Right ventricle myocardium inferior (tissue), 1 donor: ENCODE measurements at regions of chr11 and their contacts with region 1.

Region 1: GRCh38 chr11:120952461-120953434 is 71.2 kb upstream of the TBCEL start:
- DNase-seq: peak; percentile 85
- ATAC-seq: peak; percentile 94

Region 2: DNA sequence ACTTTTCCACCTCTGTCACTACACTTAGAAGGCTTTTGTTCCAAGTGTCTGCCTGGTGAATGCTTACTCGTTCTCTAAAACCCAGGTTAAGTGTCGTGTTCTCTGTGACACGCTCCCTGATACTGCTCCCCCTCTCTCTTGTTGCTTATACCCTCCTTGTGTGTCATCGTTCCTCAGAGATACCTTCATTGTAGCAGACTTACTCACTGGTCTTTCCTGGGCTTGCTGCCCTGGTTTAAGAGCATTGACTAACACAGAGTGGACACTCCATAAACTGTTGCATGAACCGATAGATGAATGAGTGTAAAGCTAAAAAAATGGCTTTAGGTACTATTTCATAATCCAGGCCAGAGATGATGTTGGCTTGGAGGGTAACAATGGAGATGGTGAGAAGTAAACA is 269.9 kb before region 1 on chr11:
- intact Hi-C with region 1: loop called (anchors 10 kb)
- DNase-seq: no peak
- ATAC-seq: no peak